Right cardiac atrium (tissue), 5 donors: ENCODE measurements at regions of chr1 and their contacts with region 1.

Region 1: GRCh38 chr1:74771913-74772515 is 39.1 kb downstream of the TYW3 start:
- DNase-seq: no peak
- ATAC-seq: no peak
- H3K4me3 ChIP-seq: no peak overlapping the region
- H3K27ac ChIP-seq: no peak overlapping the region
- H3K4me1 ChIP-seq: no peaks in the 10 kb centered on the region
- H3K27me3 ChIP-seq: no peaks in the 10 kb centered on the region

Region 2: DNA sequence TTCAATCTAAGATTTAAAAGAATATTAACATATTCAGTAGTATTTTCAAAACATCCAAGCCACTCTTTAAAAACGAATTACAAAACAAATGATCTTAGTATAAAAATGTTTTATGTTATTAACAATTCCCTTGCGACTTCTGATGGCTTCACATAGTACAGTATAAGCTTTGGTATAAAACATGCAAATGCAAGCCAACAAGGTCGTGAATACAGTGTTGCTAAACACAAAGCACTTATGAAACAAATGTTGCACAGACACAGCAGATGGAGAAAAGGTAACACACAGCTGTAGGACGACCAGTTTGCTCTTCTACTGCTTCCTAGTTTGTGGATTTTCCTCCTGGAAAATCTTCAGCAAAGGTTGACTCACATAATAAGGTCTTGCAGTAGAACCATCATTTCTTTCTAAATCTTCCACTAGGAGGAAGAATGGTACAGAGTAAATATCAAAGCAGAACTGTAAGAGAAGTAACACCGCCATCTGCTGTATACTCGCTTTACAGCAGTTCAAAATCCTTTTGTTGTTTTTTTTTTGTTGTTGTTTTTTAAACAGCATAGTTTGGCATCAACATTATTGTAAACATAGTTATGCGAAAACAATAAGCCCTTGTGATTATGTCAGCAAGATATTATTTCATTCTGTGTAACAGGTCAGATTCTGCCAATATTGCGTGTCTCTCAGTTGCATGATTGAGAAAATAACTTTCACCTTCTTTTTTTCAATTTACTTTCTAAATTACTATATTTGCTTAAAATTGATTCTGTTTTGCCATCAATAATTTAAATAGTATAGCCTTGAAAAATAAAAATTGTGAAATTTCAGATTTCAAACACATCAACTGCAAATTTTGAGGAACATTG is 431.6 kb after region 1 on chr1:
- intact Hi-C with region 1: loop called (anchors 2 to 10 kb)
- DNase-seq: no peak
- ATAC-seq: peak in 1 of 2 donors; percentile 58
- H3K4me3 ChIP-seq: no peak overlapping the region
- H3K27ac ChIP-seq: no peak overlapping the region
- H3K4me1 ChIP-seq: no peaks in the 10 kb centered on the region
- H3K27me3 ChIP-seq: no peaks in the 10 kb centered on the region

Region 3: GRCh38 chr1:75208862-75209261 is 436.8 kb after region 1 on chr1:
- intact Hi-C with region 1: loop called in 2 of 4 experiments (anchors 5 to 10 kb)
- DNase-seq: no peak
- ATAC-seq: no peak
- H3K4me3 ChIP-seq: no peak overlapping the region
- H3K27ac ChIP-seq: no peak overlapping the region
- H3K4me1 ChIP-seq: no peaks in the 10 kb centered on the region
- H3K27me3 ChIP-seq: no peaks in the 10 kb centered on the region